AG04449 (cell line): ENCODE measurements at regions of chr16 and their contacts with region 1.

Region 1: GRCh38 chr16:56317998-56318826 is 107.1 kb downstream of the AMFR start:
- DNase-seq: no peak
- H3K4me3 ChIP-seq: peak overlapping the region; percentile 33
- CTCF ChIP-seq: peak; percentile 97

Region 2: GRCh38 chr16:56041686-56042085 is 276.5 kb before region 1 on chr16:
- CTCF ChIA-PET with region 1: interaction called, 20 read pairs
- POLR2A ChIA-PET with region 1: no interaction called
- DNase-seq: no peak
- H3K4me3 ChIP-seq: no peak overlapping the region
- CTCF ChIP-seq: peak; percentile 22

Region 3: GRCh38 chr16:56211435-56211981 is 106.7 kb before region 1 on chr16:
- CTCF ChIA-PET with region 1: no interaction called
- POLR2A ChIA-PET with region 1: no interaction called
- DNase-seq: no peak
- H3K4me3 ChIP-seq: no peak overlapping the region
- CTCF ChIP-seq: no peak

Region 4: DNA sequence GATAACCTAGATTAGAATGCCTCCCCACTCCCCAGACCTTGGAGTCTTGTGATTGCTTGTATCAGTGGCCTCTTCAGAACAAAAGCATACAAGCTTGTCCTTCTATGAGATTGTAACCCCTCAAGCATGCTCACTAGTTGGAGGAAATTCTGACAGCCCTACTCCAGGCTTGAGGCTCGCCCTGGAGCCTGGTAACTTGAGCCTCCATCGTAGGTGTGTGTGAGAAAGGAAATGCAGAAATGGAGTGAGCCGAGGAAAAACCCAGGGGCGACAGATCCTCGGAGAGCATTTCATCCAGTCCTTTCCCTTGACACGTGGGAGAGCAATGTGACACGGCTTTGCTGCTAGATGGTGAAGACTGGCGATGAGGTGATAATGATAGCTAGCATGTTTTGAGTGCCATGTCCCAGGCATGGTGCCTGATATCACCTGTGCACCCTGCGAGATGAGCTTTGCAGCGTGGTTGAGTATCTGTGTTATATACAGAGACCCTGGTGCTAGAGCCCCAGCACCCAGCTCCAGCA is 95.7 kb before region 1 on chr16:
- CTCF ChIA-PET with region 1: no interaction called
- POLR2A ChIA-PET with region 1: no interaction called
- DNase-seq: no peak
- H3K4me3 ChIP-seq: no peak overlapping the region
- CTCF ChIP-seq: no peak

Region 5: GRCh38 chr16:56281256-56281805 is 36.9 kb before region 1 on chr16:
- CTCF ChIA-PET with region 1: interaction called, 11 read pairs
- POLR2A ChIA-PET with region 1: no interaction called
- DNase-seq: no peak
- H3K4me3 ChIP-seq: no peak overlapping the region
- CTCF ChIP-seq: peak; percentile 39

Region 6: DNA sequence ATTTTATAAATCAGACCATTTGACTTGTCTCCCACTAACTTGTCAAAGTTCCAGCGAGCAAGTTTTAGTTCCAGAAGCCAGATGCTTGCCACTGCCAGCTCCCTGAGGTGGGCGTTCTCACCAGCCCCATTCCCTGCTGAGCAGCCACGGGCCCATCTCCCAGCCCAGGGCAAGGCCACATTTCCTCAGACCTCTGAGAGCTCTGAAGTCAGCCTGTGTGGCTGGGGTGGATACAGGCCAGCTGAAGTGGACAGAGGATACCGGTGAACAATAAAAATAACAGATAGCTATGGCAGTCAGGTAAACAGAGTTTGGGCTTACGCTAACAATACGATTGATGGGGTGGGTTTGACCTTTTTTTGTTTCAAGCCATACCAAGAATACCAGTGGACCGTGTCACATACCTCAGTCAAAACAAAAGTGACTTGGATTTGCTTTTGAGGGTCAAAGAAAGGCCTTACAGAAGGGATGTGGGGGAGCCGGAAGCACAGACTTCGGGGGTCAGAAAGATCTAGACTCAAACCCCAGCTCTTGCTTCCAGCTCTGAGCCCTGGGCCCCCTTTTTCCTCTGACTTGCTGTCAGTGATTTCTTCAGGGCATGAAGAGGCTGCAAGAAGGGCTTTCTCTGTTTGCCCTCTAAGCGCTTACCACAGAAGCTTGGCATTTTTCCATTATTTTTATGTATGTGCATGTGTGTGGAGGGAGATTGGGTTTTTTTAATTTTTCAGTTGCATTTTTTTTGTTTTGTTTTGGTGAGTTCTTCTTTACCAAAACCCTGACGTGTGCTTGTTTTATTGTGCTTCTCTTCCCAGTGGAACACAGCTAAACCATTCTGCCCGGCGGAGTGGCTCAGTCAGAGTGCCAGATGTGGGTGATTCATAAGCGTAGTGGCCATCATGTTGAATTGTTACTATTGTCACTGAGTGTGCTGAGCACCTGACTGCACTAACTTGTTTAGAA is 17.0 kb before region 1 on chr16:
- CTCF ChIA-PET with region 1: interaction called, 74 read pairs
- POLR2A ChIA-PET with region 1: no interaction called
- DNase-seq: peak; percentile 24
- H3K4me3 ChIP-seq: no peak overlapping the region
- CTCF ChIP-seq: no peak

Region 7: DNA sequence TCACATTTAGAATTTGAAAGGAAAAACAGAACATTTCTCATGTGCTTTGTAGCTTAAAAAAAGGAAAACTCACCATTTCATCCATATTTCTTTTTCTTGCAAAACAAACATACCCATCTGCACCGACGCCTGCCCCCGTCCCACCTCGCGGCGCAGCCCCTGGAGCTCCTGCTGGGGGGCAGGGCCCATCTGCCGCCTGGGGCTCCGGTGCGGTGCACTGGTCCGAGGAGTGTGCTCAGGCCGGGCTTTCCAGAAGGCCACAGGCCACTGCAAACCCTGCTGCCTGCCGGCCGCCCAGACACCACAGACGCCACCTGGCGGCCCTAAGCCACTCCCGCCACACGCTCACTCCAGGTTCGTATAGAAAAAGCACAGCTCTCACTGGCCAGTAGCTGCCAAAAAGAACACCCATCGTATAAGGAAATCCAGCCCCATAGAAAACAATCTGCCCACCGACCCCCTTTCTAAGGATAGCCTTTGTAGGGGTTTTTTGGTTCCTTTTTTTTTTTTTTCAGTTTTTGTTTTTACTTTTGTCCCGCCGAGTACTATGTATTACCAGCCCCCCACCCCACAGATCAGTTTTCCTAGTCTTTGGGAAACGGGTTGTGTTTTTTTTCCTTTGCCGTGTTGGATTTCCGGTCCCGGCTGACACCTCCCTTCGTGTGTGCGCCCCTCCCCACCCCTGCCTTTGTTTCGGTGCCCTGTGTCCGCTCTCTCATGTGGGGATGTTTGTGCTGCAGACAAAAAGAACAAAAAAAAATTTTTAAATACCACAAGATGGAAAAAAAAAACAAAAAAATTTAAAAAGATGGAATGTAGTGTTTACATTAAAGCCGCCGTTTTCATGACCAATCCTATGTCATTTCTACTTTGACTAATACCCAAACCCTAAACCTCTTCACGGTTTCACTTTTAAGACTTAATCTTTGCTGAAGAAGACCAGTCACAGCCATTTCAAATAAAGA is 38.3 kb after region 1 on chr16:
- CTCF ChIA-PET with region 1: interaction called, 12 read pairs
- POLR2A ChIA-PET with region 1: no interaction called
- DNase-seq: no peak
- H3K4me3 ChIP-seq: peak overlapping the region; percentile 48
- CTCF ChIP-seq: peak; percentile 93

Region 8: GRCh38 chr16:56637814-56638750 is 319.9 kb after region 1 on chr16 and contains the start of gene MT1A:
- CTCF ChIA-PET with region 1: no interaction called
- POLR2A ChIA-PET with region 1: no interaction called
- DNase-seq: no peak
- H3K4me3 ChIP-seq: peak within 1 kb of the TSS; percentile 54
- CTCF ChIP-seq: no peak